ENCODE measurements at regions of chr3 and their contacts with region 1.

Region 1: GRCh38 chr3:171566803-171567422 is 106.7 kb upstream of the TNIK start:
- DNase-seq: peak; percentile 53
- ATAC-seq: no peak
- H3K4me3 ChIP-seq: no peak overlapping the region
- H3K4me3 Mint-ChIP-seq: no peak overlapping the region
- H3K27ac ChIP-seq: no peak overlapping the region
- H3K27ac Mint-ChIP-seq: no peak overlapping the region
- H3K4me1 ChIP-seq: no peaks in the 10 kb centered on the region
- H3K4me1 Mint-ChIP-seq: no peaks in the 10 kb centered on the region
- H3K27me3 ChIP-seq: no peaks in the 10 kb centered on the region
- H3K27me3 Mint-ChIP-seq: peaks cover 5% of the 10 kb centered on the region
- CTCF ChIP-seq: peak; percentile 87

Region 2: GRCh38 chr3:170740726-170741591 is 826.0 kb before region 1 on chr3:
- CTCF ChIA-PET with region 1: no interaction called
- POLR2A ChIA-PET with region 1: no interaction called
- intact Hi-C with region 1: no loop called
- DNase-seq: no peak
- ATAC-seq: no peak
- H3K4me3 ChIP-seq: no peak overlapping the region
- H3K4me3 Mint-ChIP-seq: no peak overlapping the region
- H3K27ac ChIP-seq: no peak overlapping the region
- H3K27ac Mint-ChIP-seq: no peak overlapping the region
- H3K4me1 ChIP-seq: no peaks in the 10 kb centered on the region
- H3K4me1 Mint-ChIP-seq: no peaks in the 10 kb centered on the region
- H3K27me3 ChIP-seq: peaks cover 0 to 4% (median 0%) of the 10 kb centered on the region in 4 experiments
- H3K27me3 Mint-ChIP-seq: peaks cover 3% of the 10 kb centered on the region
- CTCF ChIP-seq: no peak

Region 3: DNA sequence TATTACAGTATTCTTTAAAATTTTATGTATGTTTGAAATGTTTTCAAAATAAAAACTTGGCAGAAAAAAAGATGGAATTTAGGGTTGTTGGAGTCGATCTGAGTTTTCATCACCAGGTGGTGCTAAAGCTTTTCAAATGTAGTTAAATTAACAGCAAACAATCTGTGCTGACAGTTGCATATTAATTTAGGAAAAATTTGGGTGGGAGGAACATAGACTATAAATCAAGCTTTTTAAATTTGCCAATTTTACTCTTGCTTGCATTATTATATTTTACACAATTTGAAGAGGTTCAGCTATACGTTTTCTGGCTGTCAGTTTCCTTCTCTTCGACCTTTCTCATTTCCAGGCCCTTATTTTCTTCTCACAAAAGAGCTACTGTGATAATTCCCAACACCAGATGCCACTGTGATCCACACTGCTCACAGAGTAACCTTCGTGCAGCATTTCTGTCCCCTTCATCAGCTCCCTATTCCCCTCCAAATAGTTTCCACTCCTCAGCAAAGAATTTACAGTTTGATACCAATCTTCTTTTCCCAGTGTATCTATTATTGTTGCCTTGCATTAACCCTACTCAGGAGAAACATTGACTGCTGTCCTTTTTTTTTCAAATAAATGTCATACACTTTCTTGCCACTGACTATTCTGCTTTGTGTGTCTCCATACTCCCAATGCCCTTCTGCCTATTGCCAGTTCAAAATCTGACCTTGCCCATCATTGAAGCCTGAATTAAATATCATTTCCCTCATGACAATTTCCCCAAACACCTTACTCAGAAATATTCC is 605.1 kb before region 1 on chr3:
- CTCF ChIA-PET with region 1: interaction called, 23 read pairs
- POLR2A ChIA-PET with region 1: no interaction called
- intact Hi-C with region 1: no loop called
- DNase-seq: peak; percentile 24
- ATAC-seq: no peak
- H3K4me3 ChIP-seq: no peak overlapping the region
- H3K4me3 Mint-ChIP-seq: no peak overlapping the region
- H3K27ac ChIP-seq: no peak overlapping the region
- H3K27ac Mint-ChIP-seq: no peak overlapping the region
- H3K4me1 ChIP-seq: no peaks in the 10 kb centered on the region
- H3K4me1 Mint-ChIP-seq: no peaks in the 10 kb centered on the region
- H3K27me3 ChIP-seq: no peaks in the 10 kb centered on the region
- H3K27me3 Mint-ChIP-seq: peaks cover 4% of the 10 kb centered on the region
- CTCF ChIP-seq: peak; percentile 62

Region 4: DNA sequence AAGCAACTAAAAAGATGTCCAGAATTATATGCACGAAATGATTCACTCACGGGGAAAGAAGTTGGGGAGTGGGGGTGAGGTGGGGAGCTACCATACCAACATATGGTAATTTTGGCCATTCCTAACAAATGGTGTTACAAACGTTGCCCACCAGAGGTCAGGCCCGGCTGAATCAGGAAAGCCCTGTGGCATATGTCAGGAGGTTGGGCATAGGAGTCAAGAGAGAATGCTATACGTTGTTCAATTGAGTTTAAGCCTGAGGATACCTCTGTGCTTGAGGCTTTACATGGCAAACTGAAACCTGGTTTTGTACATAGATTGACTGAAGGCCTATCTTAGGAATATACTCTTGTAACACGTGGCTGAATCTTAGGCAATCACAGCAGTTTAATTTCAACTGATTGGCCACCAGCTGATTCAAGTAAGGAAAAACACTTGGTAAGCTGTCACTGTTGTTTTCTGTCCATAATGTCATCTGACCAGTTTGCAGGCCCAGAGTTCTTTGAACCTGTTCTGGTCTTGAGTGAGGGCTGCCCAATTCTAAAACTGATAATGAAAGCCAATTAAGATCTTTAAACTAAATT is 517.0 kb before region 1 on chr3:
- CTCF ChIA-PET with region 1: interaction called, 52 read pairs
- POLR2A ChIA-PET with region 1: no interaction called
- intact Hi-C with region 1: loop called (anchors 1 kb)
- DNase-seq: peak; percentile 38
- ATAC-seq: peak; percentile 53
- H3K4me3 ChIP-seq: no peak overlapping the region
- H3K4me3 Mint-ChIP-seq: no peak overlapping the region
- H3K27ac ChIP-seq: no peak overlapping the region
- H3K27ac Mint-ChIP-seq: no peak overlapping the region
- H3K4me1 ChIP-seq: no peaks in the 10 kb centered on the region
- H3K4me1 Mint-ChIP-seq: no peaks in the 10 kb centered on the region
- H3K27me3 ChIP-seq: no peaks in the 10 kb centered on the region
- H3K27me3 Mint-ChIP-seq: peaks cover 11% of the 10 kb centered on the region
- CTCF ChIP-seq: peak; percentile 59

Region 5: DNA sequence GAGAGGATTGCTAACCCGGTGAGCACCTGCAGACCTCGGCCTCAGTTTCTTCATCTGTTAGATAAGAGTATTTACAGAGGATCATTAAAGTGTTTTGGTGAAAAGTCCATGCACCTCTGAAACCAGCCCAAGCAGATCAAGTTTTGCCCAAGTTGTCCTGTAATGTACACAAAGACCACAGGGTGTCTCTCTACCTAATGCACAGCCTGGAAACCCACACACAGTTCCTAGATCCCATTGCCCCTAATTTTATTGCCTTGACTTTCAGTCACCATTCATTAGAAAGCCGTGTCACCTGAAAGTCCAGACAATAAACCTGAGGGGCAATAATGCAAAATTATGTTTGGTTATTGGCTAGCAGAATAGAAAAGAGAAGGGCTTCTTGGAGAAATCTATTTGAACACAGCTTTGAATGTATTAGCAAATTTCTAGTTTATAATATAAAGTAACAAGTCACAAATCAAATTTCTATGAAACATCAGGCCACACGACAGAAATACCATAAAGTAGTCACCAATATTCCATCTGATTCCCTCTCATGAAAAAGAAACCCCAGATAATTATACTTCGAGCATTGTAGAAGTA is 379.1 kb before region 1 on chr3:
- CTCF ChIA-PET with region 1: interaction called, 58 read pairs
- POLR2A ChIA-PET with region 1: no interaction called
- intact Hi-C with region 1: loop called (anchors 1 kb)
- DNase-seq: peak; percentile 32
- ATAC-seq: no peak
- H3K4me3 ChIP-seq: no peak overlapping the region
- H3K4me3 Mint-ChIP-seq: no peak overlapping the region
- H3K27ac ChIP-seq: no peak overlapping the region
- H3K27ac Mint-ChIP-seq: no peak overlapping the region
- H3K4me1 ChIP-seq: no peaks in the 10 kb centered on the region
- H3K4me1 Mint-ChIP-seq: no peaks in the 10 kb centered on the region
- H3K27me3 ChIP-seq: no peaks in the 10 kb centered on the region
- H3K27me3 Mint-ChIP-seq: no peaks in the 10 kb centered on the region
- CTCF ChIP-seq: peak; percentile 60

Region 6: DNA sequence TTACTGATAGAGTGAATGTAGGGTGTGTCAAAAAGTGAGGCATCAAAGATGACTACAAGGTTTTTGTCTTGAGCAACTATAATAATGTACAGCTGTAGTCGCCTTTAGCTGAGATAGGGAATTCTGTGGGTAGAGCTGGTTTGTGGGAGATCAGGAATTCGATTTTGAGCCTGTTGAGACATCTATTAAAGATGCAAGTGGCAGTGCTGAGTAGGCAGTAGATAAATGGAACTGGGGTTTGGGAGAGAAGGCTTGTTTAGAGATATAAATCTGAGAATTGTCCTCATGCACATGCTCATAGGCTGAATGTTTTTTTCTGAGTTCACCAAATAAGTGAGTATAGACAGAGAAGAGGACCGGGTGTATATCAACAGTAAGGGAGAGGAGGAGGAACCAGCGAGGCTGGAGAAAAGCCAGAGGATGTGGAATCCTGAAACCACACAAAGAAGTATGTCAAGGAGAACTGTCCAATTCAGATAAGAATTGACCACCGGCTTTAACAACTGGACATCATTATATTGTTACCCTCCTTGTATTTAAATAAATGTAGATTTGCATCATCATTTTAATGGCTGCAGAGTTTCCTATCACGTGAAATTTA is 39.3 kb after region 1 on chr3:
- CTCF ChIA-PET with region 1: no interaction called
- POLR2A ChIA-PET with region 1: no interaction called
- intact Hi-C with region 1: no loop called
- DNase-seq: no peak
- ATAC-seq: no peak
- H3K4me3 ChIP-seq: no peak overlapping the region
- H3K4me3 Mint-ChIP-seq: no peak overlapping the region
- H3K27ac ChIP-seq: no peak overlapping the region
- H3K27ac Mint-ChIP-seq: no peak overlapping the region
- H3K4me1 ChIP-seq: no peaks in the 10 kb centered on the region
- H3K4me1 Mint-ChIP-seq: no peaks in the 10 kb centered on the region
- H3K27me3 ChIP-seq: peaks cover 0 to 4% (median 1%) of the 10 kb centered on the region in 4 experiments
- H3K27me3 Mint-ChIP-seq: peaks cover 8% of the 10 kb centered on the region
- CTCF ChIP-seq: no peak